ENCODE measurements at regions of chr3 and their contacts with region 1.

Region 1: GRCh38 chr3:184543843-184544512 is 17.6 kb upstream of the EPHB3 start:
- H3K4me3 ChIP-seq: no peak overlapping the region
- H3K27ac ChIP-seq: no peak overlapping the region
- H3K4me1 ChIP-seq: no peaks in the 10 kb centered on the region
- CTCF ChIP-seq: peak; percentile 63; the same call in 1 of the 2 replicates

Region 2: GRCh38 chr3:184354121-184354728 is 189.8 kb before region 1 on chr3:
- CTCF ChIA-PET with region 1: interaction called, 15 read pairs
- POLR2A ChIA-PET with region 1: no interaction called
- H3K4me3 ChIP-seq: no peak overlapping the region
- H3K27ac ChIP-seq: no peak overlapping the region
- H3K4me1 ChIP-seq: no peaks in the 10 kb centered on the region
- CTCF ChIP-seq: peak; percentile 54; the same call in 1 of the 2 replicates

Region 3: DNA sequence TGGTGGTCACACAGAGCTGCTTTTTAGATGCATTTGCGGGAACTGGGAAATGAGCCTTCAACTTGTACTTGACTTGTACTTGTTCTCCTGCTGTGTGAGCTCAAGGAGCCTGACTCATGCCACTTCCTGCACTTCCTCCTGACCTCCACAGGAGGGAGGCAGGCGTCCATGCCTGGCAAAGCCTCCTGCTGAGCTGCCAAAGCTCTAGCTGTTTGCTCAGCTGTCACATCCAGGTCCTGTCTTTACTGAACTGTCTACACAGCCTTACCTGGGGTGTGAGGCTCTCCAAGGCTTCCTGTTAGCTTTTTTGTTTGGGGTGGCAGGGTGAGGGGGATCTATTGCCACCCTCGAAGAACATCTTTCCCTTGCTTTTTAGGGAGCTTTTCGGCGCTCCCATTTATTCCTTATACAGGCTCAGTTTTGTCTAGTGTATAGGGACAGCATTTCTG is 172.4 kb before region 1 on chr3:
- CTCF ChIA-PET with region 1: interaction called, 184 read pairs
- POLR2A ChIA-PET with region 1: no interaction called
- H3K4me3 ChIP-seq: no peak overlapping the region
- H3K27ac ChIP-seq: no peak overlapping the region
- H3K4me1 ChIP-seq: no peaks in the 10 kb centered on the region
- CTCF ChIP-seq: peak; percentile 86

Region 4: GRCh38 chr3:184399410-184399809 is 144.6 kb before region 1 on chr3:
- CTCF ChIA-PET with region 1: no interaction called
- POLR2A ChIA-PET with region 1: no interaction called
- H3K4me3 ChIP-seq: no peak overlapping the region
- H3K27ac ChIP-seq: no peak overlapping the region
- H3K4me1 ChIP-seq: no peaks in the 10 kb centered on the region
- CTCF ChIP-seq: no peak

Region 5: GRCh38 chr3:184469423-184469822 is 74.6 kb before region 1 on chr3:
- CTCF ChIA-PET with region 1: interaction called, 22 read pairs
- POLR2A ChIA-PET with region 1: no interaction called
- H3K4me3 ChIP-seq: no peak overlapping the region
- H3K27ac ChIP-seq: no peak overlapping the region
- H3K4me1 ChIP-seq: no peaks in the 10 kb centered on the region
- CTCF ChIP-seq: 0 out of 2 replicates have a peak, but pooled peaks have one; percentile 38

Region 6: DNA sequence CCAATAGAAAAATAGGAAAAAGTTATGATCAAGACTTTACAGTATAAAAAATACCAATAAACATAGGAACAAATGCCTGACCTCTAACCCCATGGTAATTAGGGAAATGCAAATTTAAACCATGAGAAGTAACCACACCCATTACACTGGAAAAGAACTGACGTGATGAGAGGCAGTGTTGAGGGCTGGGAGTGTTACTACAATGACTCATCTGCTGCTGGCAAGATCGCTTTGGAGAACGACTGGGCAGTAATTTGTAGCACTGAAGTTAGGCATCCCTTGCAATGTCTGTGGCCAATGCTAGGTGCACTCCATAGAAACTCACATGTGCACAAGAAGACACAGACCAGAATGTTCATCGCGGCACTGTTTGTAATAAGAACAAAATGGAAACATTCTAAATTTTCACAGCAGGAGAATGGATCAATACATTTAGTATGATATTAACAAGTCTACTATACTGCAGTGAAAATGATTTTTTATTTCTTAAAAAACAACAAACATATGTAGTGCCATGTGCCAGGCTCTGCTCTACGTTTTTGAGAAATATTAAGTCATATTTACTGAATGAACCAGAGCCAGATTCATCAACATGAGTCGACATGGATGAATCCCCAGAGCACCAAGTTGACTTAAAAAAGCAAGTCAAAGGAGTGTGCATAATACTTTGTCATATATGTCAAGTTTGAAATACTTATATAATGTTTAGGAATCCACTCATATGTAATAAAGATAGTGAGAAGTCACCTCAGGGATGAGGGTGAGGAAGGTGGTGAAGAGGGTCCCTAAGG is 20.0 kb before region 1 on chr3:
- CTCF ChIA-PET with region 1: interaction called, 35 read pairs
- POLR2A ChIA-PET with region 1: no interaction called
- H3K4me3 ChIP-seq: no peak overlapping the region
- H3K27ac ChIP-seq: no peak overlapping the region
- H3K4me1 ChIP-seq: no peaks in the 10 kb centered on the region
- CTCF ChIP-seq: no peak

Region 7: GRCh38 chr3:184531626-184532280 is 12.2 kb before region 1 on chr3:
- CTCF ChIA-PET with region 1: interaction called, 35 read pairs
- POLR2A ChIA-PET with region 1: no interaction called
- H3K4me3 ChIP-seq: no peak overlapping the region
- H3K27ac ChIP-seq: no peak overlapping the region
- H3K4me1 ChIP-seq: no peaks in the 10 kb centered on the region
- CTCF ChIP-seq: no peak

Region 8: GRCh38 chr3:184836090-184836822 is 292.3 kb after region 1 on chr3:
- CTCF ChIA-PET with region 1: no interaction called
- POLR2A ChIA-PET with region 1: no interaction called
- H3K4me3 ChIP-seq: no peak overlapping the region
- H3K27ac ChIP-seq: no peak overlapping the region
- H3K4me1 ChIP-seq: no peaks in the 10 kb centered on the region
- CTCF ChIP-seq: no peak